ENCODE measurements at regions of chr6 and their contacts with region 1.

Region 1: GRCh38 chr6:133923938-133924593 is 29.0 kb upstream of the TBPL1 start:
- DNase-seq: peak; percentile 8 to 82 (median 53)
- ATAC-seq: peak; percentile 80
- H3K4me3 ChIP-seq: no peak overlapping the region
- H3K4me3 Mint-ChIP-seq: no peak overlapping the region
- H3K27ac ChIP-seq: no peak overlapping the region
- H3K27ac Mint-ChIP-seq: no peak overlapping the region
- H3K4me1 ChIP-seq: no peaks in the 10 kb centered on the region
- H3K4me1 Mint-ChIP-seq: no peaks in the 10 kb centered on the region
- H3K27me3 ChIP-seq: no peaks in the 10 kb centered on the region
- H3K27me3 Mint-ChIP-seq: peaks cover 22% of the 10 kb centered on the region
- CTCF ChIP-seq: peak; percentile 91

Region 2: DNA sequence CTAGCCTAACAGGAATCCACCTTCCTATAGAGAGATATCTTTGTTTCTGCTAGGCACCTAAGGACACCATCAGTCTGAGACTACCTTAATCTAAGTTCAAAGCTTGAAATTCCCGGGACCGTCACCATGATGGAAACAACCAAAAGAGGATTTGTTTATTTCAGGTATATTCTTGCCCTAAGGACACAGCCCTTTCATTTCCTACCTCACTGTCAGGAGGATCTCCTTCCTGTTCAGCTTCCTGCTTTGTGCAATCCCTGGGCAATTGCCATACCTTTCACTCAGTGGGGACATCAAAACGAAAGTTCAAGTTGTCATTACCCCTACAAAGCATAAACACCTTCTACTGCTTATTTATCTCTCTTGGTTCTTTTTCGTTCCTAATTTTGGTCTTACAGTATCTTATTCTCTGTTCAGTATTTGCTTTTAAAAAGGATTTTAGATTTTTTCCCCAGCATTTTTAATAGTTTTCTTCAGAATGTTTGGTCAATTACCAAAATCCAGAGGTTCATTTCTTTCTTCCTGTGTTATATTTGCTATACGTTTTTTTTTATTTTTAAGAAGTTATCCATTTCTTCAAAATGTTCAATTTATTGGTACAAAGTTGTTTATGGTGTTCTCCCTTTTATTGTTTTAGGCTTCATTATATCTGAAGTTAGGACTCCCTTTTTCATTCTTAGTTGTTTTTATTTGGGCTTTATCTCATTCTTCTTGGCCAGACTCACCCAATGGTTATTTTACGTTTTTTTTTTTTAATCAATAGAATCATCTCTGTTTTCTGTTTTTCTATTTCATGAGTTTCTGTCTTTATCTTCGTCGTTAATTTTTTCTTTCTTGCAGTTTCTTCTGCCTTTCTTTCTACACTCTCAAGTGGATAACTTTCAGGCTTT is 16.0 kb after region 1 on chr6:
- CTCF ChIA-PET with region 1: interaction called, 14 read pairs
- POLR2A ChIA-PET with region 1: no interaction called
- intact Hi-C with region 1: no loop called
- DNase-seq: no peak
- ATAC-seq: no peak
- H3K4me3 ChIP-seq: no peak overlapping the region
- H3K4me3 Mint-ChIP-seq: no peak overlapping the region
- H3K27ac ChIP-seq: no peak overlapping the region
- H3K27ac Mint-ChIP-seq: no peak overlapping the region
- H3K4me1 ChIP-seq: no peaks in the 10 kb centered on the region
- H3K4me1 Mint-ChIP-seq: no peaks in the 10 kb centered on the region
- H3K27me3 ChIP-seq: no peaks in the 10 kb centered on the region
- H3K27me3 Mint-ChIP-seq: peaks cover 15% of the 10 kb centered on the region
- CTCF ChIP-seq: no peak

Region 3: DNA sequence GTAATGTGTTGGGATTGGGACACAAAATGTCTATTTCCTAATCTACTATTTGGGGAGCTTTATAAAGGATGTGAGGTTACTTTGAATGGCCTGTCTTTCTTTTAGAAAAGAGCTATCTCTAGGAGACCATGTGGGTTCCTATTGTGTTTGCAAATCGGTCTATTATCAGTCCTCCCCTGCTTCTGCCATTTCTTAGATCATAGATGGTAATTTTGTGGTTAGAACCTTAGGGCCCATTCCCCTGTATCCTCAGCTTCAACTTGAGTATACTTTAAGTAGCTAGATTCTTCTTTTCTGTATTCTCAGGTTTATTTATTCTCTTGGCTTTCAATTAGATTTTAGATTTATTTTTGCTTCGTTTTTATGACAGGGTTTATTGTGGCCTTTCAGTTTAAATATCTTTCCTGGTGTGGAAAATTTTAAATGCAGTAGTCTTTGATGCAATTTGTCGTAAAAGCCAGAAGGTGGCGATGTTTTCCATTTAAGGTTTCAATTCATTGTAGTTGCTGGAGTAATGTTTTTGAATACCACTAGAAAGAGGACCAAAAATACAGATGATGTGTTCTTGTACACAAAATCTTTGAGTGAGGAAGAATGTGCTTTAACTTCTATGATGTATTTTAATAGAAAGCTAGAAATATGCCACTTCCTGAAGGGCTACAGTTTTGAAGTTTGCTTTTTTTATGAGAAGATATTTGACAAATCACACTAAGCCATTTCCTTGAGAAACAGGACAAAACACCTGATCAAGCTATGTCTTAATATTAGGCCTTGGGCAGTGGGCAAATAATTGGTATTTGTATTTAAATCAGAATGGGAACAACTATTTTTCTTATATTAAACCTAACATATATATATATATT is 49.3 kb after region 1 on chr6:
- CTCF ChIA-PET with region 1: interaction called, 71 read pairs
- POLR2A ChIA-PET with region 1: no interaction called
- intact Hi-C with region 1: loop called (anchors 1 to 2 kb)
- DNase-seq: peak in 2 of 9 experiments; percentile 58 to 72
- ATAC-seq: peak; percentile 79
- H3K4me3 ChIP-seq: no peak overlapping the region
- H3K4me3 Mint-ChIP-seq: no peak overlapping the region
- H3K27ac ChIP-seq: no peak overlapping the region
- H3K27ac Mint-ChIP-seq: no peak overlapping the region
- H3K4me1 ChIP-seq: no peaks in the 10 kb centered on the region
- H3K4me1 Mint-ChIP-seq: peaks cover 61% of the 10 kb centered on the region
- H3K27me3 ChIP-seq: no peaks in the 10 kb centered on the region
- H3K27me3 Mint-ChIP-seq: no peaks in the 10 kb centered on the region
- CTCF ChIP-seq: peak; percentile 89

Region 4: GRCh38 chr6:134047673-134048072 is 123.6 kb after region 1 on chr6:
- CTCF ChIA-PET with region 1: interaction called, 10 read pairs
- POLR2A ChIA-PET with region 1: no interaction called
- intact Hi-C with region 1: no loop called
- DNase-seq: no peak
- ATAC-seq: no peak
- H3K4me3 ChIP-seq: no peak overlapping the region
- H3K4me3 Mint-ChIP-seq: no peak overlapping the region
- H3K27ac ChIP-seq: no peak overlapping the region
- H3K27ac Mint-ChIP-seq: no peak overlapping the region
- H3K4me1 ChIP-seq: no peaks in the 10 kb centered on the region
- H3K4me1 Mint-ChIP-seq: peaks cover 8% of the 10 kb centered on the region
- H3K27me3 ChIP-seq: no peaks in the 10 kb centered on the region
- H3K27me3 Mint-ChIP-seq: peaks cover 8% of the 10 kb centered on the region
- CTCF ChIP-seq: no peak

Region 5: GRCh38 chr6:134097114-134097707 is 173.1 kb after region 1 on chr6:
- CTCF ChIA-PET with region 1: interaction called, 170 read pairs
- POLR2A ChIA-PET with region 1: interaction called, 12 read pairs
- intact Hi-C with region 1: loop called (anchors 1 kb)
- DNase-seq: peak; percentile 27 to 78 (median 65)
- ATAC-seq: no peak
- H3K4me3 ChIP-seq: no peak overlapping the region
- H3K4me3 Mint-ChIP-seq: no peak overlapping the region
- H3K27ac ChIP-seq: no peak overlapping the region
- H3K27ac Mint-ChIP-seq: no peak overlapping the region
- H3K4me1 ChIP-seq: no peaks in the 10 kb centered on the region
- H3K4me1 Mint-ChIP-seq: no peaks in the 10 kb centered on the region
- H3K27me3 ChIP-seq: peaks cover 0 to 3% of the 10 kb centered on the region in 2 experiments
- H3K27me3 Mint-ChIP-seq: peaks cover 13% of the 10 kb centered on the region
- CTCF ChIP-seq: peak; percentile 88